ENCODE measurements at regions of chr5 and their contacts with region 1.

Region 1: GRCh38 chr5:132802044-132802684 is 10.9 kb upstream of the SOWAHA start:
- DNase-seq: no peak
- H3K4me3 Mint-ChIP-seq: no peak overlapping the region
- H3K27ac Mint-ChIP-seq: no peak overlapping the region
- H3K4me1 Mint-ChIP-seq: peaks cover 6% of the 10 kb centered on the region
- H3K27me3 Mint-ChIP-seq: peaks cover 43% of the 10 kb centered on the region

Region 2: DNA sequence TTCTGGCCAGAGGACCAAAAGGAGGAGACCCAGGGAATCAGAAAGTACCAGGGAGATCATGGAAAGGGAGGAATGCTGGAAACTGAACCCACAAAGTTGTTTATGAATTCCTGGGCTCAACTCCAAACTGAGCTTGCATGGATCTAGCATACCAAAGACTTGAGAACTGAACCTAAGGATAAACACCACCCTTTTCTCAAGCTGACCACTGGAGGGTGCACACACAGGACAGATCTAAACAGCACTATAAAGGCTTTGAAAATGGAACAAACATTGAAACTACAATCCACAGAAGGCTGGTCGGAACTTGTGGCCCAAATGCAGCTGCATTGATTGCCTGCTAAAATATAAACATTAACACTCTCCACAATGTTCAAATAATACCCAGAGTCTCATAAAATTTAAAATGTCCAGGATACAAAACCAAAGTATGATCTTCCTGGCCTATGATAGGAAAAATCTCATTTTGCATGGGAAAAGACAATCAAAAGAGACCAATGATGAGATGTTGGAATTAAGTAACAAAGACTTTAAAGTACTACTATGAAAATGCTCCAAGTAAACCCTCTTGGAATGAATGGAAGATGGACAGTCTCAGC is 296.0 kb before region 1 on chr5:
- intact Hi-C with region 1: loop called (anchors 1 kb)
- DNase-seq: no peak
- H3K4me3 Mint-ChIP-seq: no peak overlapping the region
- H3K27ac Mint-ChIP-seq: no peak overlapping the region
- H3K4me1 Mint-ChIP-seq: peaks cover 54% of the 10 kb centered on the region
- H3K27me3 Mint-ChIP-seq: peaks cover 4% of the 10 kb centered on the region